Heart right ventricle (tissue), 16 donors: ENCODE measurements at regions of chr18 and their contacts with region 1.

Region 1: GRCh38 chr18:68972176-68972575 is 174.3 kb downstream of the CCDC102B start:
- DNase-seq: no peak
- ATAC-seq: no peak
- H3K4me3 ChIP-seq: no peak overlapping the region
- H3K27ac ChIP-seq: no peak overlapping the region
- H3K4me1 ChIP-seq: no peaks in the 10 kb centered on the region
- H3K27me3 ChIP-seq: no peaks in the 10 kb centered on the region
- CTCF ChIP-seq: no peak

Region 2: DNA sequence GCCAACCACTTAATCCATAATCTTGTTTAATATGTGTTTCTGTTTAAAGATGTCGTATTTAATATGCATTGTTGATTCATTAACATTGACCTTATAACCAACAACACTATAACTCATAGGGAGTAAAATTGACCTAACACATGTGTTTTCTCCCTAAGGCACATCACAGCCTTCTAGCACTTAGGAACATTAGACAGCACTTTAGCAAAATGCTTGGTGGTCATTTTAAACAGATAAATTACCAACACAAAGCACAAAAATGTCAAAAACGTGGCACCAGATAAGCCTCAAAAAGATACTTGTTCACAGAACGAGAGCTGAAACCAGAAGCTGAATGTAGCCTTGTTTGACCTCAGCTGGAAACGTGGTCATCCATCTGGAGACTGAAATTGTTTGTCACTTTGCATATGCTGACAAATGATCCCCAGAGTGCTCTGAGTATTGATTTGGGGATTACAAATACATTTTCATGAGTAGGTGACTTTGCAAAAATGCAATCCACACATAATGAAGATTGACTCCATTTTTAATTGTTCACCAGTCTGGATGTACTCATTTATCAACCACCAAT is 35.1 kb before region 1 on chr18:
- intact Hi-C with region 1: no loop called
- DNase-seq: no peak
- ATAC-seq: no peak
- H3K4me3 ChIP-seq: no peak overlapping the region
- H3K27ac ChIP-seq: no peak overlapping the region
- H3K4me1 ChIP-seq: no peaks in the 10 kb centered on the region
- H3K27me3 ChIP-seq: no peaks in the 10 kb centered on the region
- CTCF ChIP-seq: no peak

Region 3: DNA sequence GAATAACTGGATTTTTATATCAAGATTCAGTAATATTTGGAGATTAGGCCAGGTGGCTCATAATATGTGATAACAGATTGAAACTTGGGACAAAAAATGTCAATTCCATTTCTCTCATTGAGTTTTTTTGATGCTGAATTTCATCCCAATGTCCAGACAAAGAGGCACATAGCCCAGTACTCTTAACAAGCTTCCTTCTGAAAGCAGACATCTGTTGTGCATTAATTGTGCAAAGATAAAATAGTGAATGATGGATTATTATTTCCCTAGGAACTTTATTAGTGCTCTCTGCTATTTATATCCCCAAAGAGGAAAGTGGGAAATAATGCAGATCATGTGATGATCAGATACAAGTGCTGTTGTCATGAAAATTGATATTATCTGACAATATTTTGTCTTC is 59.8 kb after region 1 on chr18:
- intact Hi-C with region 1: loop called in 1 of 10 experiments (anchors 10 kb)
- DNase-seq: no peak
- ATAC-seq: no peak
- H3K4me3 ChIP-seq: no peak overlapping the region
- H3K27ac ChIP-seq: no peak overlapping the region
- H3K4me1 ChIP-seq: peaks cover 0 to 17% (median 0%) of the 10 kb centered on the region in 9 donors
- H3K27me3 ChIP-seq: no peaks in the 10 kb centered on the region
- CTCF ChIP-seq: no peak